ENCODE measurements at regions of chr2 and their contacts with region 1.

Region 1: GRCh38 chr2:130873700-130874346 is 37.1 kb downstream of the ARHGEF4 start:
- DNase-seq: no peak

Region 2: GRCh38 chr2:129203331-129203730 is 1670.5 kb before region 1 on chr2:
- intact Hi-C with region 1: no loop called
- DNase-seq: no peak

Region 3: DNA sequence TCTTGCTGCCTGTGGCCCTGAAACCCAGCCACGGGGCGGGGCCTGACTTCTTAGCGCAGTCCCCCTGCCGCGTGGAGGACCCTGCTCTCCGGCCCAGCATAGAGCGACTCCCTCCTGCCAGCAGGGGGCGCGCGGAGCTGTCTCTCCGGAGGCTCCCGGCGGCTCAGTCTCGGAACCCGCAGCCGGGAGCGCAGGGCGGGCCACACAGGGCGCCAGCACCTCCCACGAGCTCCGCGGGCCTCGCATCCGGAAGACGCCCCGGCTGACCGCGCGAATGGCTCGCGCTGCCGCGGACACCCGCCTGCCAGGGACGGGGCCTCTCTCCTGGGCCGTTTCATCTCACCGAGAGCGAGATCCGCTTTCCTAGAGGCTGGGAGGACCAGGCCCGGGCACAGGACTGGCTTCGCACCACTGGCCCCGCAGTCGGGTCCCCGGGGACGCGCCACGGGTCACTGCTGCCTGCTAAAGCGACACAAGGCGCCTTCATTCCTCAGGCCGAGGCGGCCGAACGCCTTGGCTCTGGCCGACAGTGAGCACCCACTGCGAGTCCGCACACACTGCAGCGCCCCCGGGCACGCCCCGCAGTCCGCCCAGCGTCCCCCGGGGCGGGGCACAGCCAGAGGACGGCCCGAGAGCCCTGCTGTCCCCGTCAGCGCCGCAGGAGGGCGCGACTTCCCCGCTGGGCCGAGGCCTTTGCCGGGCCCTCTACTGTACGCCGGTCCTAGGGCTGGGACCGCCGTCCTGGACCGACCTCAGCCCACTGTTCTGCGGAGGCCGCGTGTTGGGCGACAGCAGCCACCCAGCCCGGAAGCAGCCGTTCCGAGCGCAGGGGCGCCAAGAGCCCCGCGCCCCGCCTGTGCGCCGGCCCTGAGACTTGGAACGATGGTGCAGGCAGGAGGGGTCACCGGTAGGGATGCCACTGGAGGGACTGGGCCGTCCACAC is 76.1 kb before region 1 on chr2:
- intact Hi-C with region 1: loop called in 1 of 2 experiments (anchors 5 kb)
- DNase-seq: peak; percentile 97

Measured in posterior vena cava (tissue), 2 donors.